ENCODE measurements at regions of chr15 and their contacts with region 1.

Region 1: GRCh38 chr15:92808978-92809879 is 90.9 kb upstream of the CHD2 start:
- DNase-seq: peak; percentile 99
- ATAC-seq: peak; percentile 89
- H3K4me3 Mint-ChIP-seq: peak overlapping the region; percentile 80
- H3K27ac Mint-ChIP-seq: peak overlapping the region; percentile 99
- H3K4me1 Mint-ChIP-seq: peaks cover 48% of the 10 kb centered on the region
- H3K27me3 Mint-ChIP-seq: no peaks in the 10 kb centered on the region

Region 2: GRCh38 chr15:92797168-92797951 is 11.9 kb before region 1 on chr15:
- CTCF ChIA-PET with region 1: interaction called, 29 read pairs
- DNase-seq: no peak
- ATAC-seq: peak; percentile 86
- H3K4me3 Mint-ChIP-seq: no peak overlapping the region
- H3K27ac Mint-ChIP-seq: no peak overlapping the region
- H3K4me1 Mint-ChIP-seq: peaks cover 12% of the 10 kb centered on the region
- H3K27me3 Mint-ChIP-seq: no peaks in the 10 kb centered on the region

Region 3: DNA sequence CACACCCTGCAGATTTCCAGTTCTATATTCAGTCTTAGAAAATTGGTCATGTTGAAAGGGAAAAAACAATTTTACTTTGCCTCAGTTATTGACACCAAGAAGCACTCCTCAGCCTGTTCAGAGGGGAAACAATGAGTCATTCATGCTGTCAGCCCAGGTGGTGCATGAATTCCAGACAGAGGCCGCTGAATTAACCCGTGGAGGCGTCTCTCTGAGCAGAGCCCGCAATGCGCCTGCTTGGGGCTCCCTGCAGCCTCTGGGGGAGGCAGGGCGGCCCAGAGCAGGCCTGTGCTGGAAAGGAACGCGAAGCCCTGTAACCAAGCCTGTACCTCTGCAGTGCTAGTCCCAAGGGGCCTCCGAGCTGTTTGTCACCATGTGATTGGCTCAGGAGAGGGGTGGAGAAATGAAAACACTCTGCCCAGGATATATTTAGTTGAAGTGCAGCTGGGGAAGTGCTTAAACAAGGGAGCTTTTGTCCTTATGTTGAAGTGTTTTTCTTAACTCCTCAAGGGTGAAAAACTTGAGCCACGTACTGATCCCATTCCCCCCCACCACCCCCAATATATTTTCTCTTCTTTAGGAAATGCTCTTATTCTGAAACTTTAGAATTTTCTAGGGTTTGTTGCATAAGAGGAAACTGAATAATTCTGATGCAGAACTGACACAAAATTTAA is 22.6 kb after region 1 on chr15:
- CTCF ChIA-PET with region 1: interaction called, 58 read pairs
- DNase-seq: peak; percentile 96
- ATAC-seq: peak; percentile 97
- H3K4me3 Mint-ChIP-seq: peak overlapping the region; percentile 68
- H3K27ac Mint-ChIP-seq: peak overlapping the region; percentile 98
- H3K4me1 Mint-ChIP-seq: peaks cover 42% of the 10 kb centered on the region
- H3K27me3 Mint-ChIP-seq: no peaks in the 10 kb centered on the region

Region 4: GRCh38 chr15:92853222-92853621 is 44.0 kb after region 1 on chr15:
- CTCF ChIA-PET with region 1: no interaction called
- DNase-seq: no peak
- ATAC-seq: no peak
- H3K4me3 Mint-ChIP-seq: no peak overlapping the region
- H3K27ac Mint-ChIP-seq: no peak overlapping the region
- H3K4me1 Mint-ChIP-seq: peaks cover 15% of the 10 kb centered on the region
- H3K27me3 Mint-ChIP-seq: no peaks in the 10 kb centered on the region

Region 5: DNA sequence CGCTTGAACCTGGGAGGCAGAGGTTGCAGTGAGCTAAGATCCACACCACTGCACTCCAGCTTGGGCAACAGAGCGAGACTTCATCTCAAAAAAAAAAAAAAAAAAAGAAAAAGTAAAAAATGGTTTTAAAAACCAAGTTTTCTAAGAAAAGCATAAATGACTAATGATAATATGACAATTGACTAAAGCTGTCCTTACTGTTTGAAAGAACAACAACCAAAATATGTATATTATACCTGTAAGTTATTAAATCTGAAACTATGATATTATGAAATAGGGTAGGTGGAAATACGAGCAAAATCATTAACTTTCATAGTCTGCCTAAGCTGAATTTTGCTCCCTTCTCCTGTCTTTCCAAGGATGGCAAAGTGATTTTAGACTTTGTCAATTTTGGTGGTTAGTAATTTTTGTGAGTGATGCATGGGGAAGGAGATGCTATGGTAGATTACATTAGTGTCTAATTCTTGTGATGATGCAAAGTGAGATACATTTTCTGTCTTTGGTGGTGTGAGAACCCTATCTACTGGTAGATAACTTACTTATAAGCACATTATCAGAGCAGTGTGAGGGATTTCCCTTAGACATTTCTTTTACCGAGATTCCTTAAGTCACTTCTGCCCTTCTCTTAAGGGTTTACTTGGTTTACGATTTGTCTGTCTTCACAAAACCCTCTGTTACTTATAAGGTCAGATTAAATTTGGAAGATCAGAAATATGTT is 80.3 kb after region 1 on chr15:
- CTCF ChIA-PET with region 1: interaction called, 98 read pairs
- DNase-seq: no peak
- ATAC-seq: peak; percentile 57
- H3K4me3 Mint-ChIP-seq: peak overlapping the region; percentile 55
- H3K27ac Mint-ChIP-seq: peak overlapping the region; percentile 80
- H3K4me1 Mint-ChIP-seq: peaks cover 66% of the 10 kb centered on the region
- H3K27me3 Mint-ChIP-seq: no peaks in the 10 kb centered on the region

Region 6: GRCh38 chr15:92917606-92918407 is 108.6 kb after region 1 on chr15:
- CTCF ChIA-PET with region 1: interaction called, 147 read pairs
- DNase-seq: peak; percentile 96
- ATAC-seq: peak; percentile 54
- H3K4me3 Mint-ChIP-seq: peak overlapping the region; percentile 32
- H3K27ac Mint-ChIP-seq: peak overlapping the region; percentile 86
- H3K4me1 Mint-ChIP-seq: peaks cover 83% of the 10 kb centered on the region
- H3K27me3 Mint-ChIP-seq: no peaks in the 10 kb centered on the region

Measured in activated CD8-positive, alpha-beta memory T cell treated with anti-CD3 and anti-CD28 coated beads, Interleukin-2, amount 10 ng/mL, durations not matched to agents 7 days and 5 days (primary cell).